Lower leg skin (tissue), 4 donors: ENCODE measurements at regions of chr18 and their contacts with region 1.

Region 1: GRCh38 chr18:48367557-48367956 is 41.6 kb downstream of the ZBTB7C start:
- DNase-seq: no peak
- H3K4me3 ChIP-seq: no peak overlapping the region
- CTCF ChIP-seq: no peak
- POLR2A ChIP-seq: no peak

Region 2: DNA sequence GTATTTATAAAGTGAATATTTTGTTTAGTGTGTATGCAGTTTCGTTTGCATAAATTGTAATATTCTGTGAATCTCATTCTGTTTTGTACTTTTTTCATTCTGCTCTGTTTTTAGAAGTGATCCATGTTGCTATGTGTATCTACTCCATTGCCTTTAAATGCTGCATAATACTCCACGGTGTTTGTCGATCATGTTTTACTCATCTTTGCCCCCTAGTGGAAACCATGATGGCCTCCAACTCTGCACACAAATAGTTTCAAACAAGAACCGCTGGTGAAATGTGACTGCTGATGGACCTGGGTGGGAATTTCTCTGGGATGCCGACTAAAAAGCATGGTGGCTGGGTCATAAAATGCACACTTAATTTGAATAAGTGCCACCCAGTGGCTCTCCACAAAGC is 1084.1 kb before region 1 on chr18:
- intact Hi-C with region 1: loop called (anchors 10 kb)
- DNase-seq: no peak
- H3K4me3 ChIP-seq: no peak overlapping the region
- CTCF ChIP-seq: no peak
- POLR2A ChIP-seq: no peak

Region 3: DNA sequence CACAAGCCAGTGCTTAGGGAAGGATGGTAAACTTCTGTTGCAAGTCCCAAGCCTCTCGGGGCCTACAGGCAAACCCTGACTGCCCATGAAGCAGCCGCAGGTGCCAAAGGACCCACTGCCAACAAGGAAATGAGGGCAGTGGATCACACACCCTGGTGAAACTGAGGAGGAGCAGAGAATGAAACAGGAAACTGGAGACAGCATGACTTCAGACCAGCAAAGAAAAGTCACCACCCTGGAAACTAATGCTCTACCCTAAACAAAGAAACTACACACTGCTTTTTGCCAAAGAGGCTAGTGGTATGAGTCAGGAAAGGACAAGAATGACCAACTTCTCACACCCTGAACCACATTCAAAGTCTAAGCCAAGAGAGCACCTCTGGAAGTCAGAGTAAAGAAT is 1730.1 kb after region 1 on chr18:
- intact Hi-C with region 1: no loop called
- DNase-seq: peak in 1 of 2 donors; percentile 75
- H3K4me3 ChIP-seq: no peak overlapping the region
- CTCF ChIP-seq: no peak
- POLR2A ChIP-seq: no peak